B cell (primary cell): ENCODE measurements at regions of chr11 and their contacts with region 1.

Region 1: DNA sequence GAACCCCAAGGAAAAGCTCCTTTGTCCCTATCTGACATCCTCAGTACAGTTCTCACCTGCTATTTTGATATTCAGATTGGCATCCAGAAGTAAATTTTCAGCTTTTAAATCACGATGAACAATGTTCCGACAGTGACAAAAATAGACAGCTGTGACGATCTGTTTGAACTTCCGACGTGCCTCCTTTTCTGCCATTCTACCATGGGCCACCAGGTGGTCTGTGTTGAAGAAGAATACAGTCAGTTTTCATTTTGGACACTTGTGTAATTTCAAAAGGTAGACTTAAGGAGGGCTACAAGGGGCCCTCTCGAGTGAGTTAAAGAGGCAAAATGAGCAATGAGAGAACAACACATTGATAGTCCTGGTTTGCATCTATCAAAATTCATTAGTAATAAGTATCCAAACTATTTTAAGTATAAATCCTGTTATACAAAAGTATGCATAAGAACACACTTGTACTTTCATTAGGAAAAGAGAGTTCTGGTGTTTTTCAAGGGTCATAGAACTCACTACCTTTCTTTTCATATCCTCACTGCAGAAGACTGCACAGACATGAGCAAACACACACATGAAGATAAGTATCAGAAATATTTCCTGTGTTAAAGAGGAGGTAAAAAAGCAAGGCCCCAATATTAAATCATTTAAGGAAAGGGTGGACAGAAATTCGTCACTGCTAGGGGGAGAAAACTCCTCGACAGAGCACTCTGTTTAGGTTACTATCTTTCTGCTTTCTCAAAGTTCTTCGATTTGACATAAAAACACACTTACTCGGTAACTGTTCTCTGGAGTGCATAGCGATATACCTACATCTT is 89.9 kb upstream of the APOA1 start:
- DNase-seq: peak; percentile 81
- ATAC-seq: peak; percentile 44
- H3K4me3 ChIP-seq: peak overlapping the region in 3 of 5 experiments; percentile 24 to 54 (median 32)
- H3K4me3 Mint-ChIP-seq: peak overlapping the region; percentile 79
- H3K27ac ChIP-seq: peak overlapping the region; percentile 95 to 96
- H3K27ac Mint-ChIP-seq: peak overlapping the region; percentile 95
- H3K4me1 ChIP-seq: peaks cover 86 to 91% of the 10 kb centered on the region in 2 donors
- H3K4me1 Mint-ChIP-seq: peaks cover 79% of the 10 kb centered on the region
- H3K27me3 ChIP-seq: no peaks in the 10 kb centered on the region
- H3K27me3 Mint-ChIP-seq: no peaks in the 10 kb centered on the region
- CTCF ChIP-seq: peak; percentile 79

Region 2: DNA sequence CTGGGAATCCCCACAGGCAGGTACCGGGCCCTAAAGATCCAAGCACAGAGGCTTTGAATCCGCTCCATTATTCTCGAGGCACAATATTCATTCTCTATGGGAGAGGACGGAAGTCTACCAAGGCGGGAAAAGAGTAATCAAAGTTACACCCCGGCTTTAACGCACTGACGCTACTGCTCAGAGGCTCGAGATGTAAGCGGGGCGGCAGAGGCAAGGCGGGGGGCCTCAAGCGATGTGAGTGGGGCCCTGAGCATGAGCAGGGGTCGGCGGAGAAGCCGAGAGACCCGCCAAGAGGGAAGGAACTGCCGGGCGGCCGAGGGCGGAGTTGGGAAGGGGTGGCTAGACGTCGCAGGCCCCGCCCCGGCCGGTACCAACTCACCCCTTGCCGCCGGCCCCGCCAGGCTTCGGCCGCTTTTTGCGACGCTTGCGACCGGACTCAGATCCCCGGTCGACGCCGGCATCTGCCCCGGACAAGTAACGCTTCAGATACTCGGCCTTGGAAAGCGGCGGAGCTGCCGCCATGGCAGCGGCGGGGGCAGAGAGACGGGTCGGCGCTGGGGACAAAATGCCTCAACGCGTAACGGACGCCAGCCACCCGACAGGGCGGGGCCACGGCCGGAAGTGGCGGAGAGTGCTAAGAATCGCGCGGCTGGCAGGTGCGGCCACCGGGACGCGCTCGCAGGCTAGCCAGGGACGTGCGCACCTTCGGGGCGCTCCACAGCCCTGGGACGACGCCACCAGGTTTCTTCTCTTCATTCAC is 154.7 kb before region 1 on chr11 and contains the start of gene BUD13:
- CTCF ChIA-PET with region 1: no interaction called
- POLR2A ChIA-PET with region 1: no interaction called
- intact Hi-C with region 1: loop called (anchors 5 kb)
- DNase-seq: peak; percentile 96
- ATAC-seq: peak; percentile 89
- H3K4me3 ChIP-seq: peak within 1 kb of the TSS; percentile 71 to 99 (median 95)
- H3K4me3 Mint-ChIP-seq: peak within 1 kb of the TSS; percentile 93
- H3K27ac ChIP-seq: peak within 1 kb of the TSS; percentile 85 to 96
- H3K27ac Mint-ChIP-seq: peak within 1 kb of the TSS; percentile 93
- H3K4me1 ChIP-seq: peaks cover 23 to 28% of the 10 kb centered on the region in 2 donors
- H3K4me1 Mint-ChIP-seq: peaks cover 34% of the 10 kb centered on the region
- H3K27me3 ChIP-seq: no peaks in the 10 kb centered on the region
- H3K27me3 Mint-ChIP-seq: no peaks in the 10 kb centered on the region
- CTCF ChIP-seq: no peak
- total RNA-seq, gene BUD13: 24.2 and 24.8 TPM in 2 replicates

Region 3: GRCh38 chr11:116895048-116895757 is 32.2 kb before region 1 on chr11:
- CTCF ChIA-PET with region 1: no interaction called
- POLR2A ChIA-PET with region 1: no interaction called
- intact Hi-C with region 1: loop called (anchors 5 kb)
- DNase-seq: peak; percentile 64
- ATAC-seq: peak; percentile 63
- H3K4me3 ChIP-seq: no peak overlapping the region
- H3K4me3 Mint-ChIP-seq: no peak overlapping the region
- H3K27ac ChIP-seq: peak overlapping the region in 1 of 2 donors; percentile 51
- H3K27ac Mint-ChIP-seq: peak overlapping the region; percentile 34
- H3K4me1 ChIP-seq: peaks cover 0 to 5% of the 10 kb centered on the region in 2 donors
- H3K4me1 Mint-ChIP-seq: peaks cover 13% of the 10 kb centered on the region
- H3K27me3 ChIP-seq: no peaks in the 10 kb centered on the region
- H3K27me3 Mint-ChIP-seq: no peaks in the 10 kb centered on the region
- CTCF ChIP-seq: peak; percentile 20

Region 4: GRCh38 chr11:116948391-116948790 is 21.0 kb after region 1 on chr11:
- CTCF ChIA-PET with region 1: interaction called, 7 read pairs
- POLR2A ChIA-PET with region 1: interaction called, 6 read pairs
- intact Hi-C with region 1: loop called (anchors 2 kb)
- DNase-seq: peak; percentile 23
- ATAC-seq: no peak
- H3K4me3 ChIP-seq: no peak overlapping the region
- H3K4me3 Mint-ChIP-seq: peak overlapping the region; percentile 32
- H3K27ac ChIP-seq: peak overlapping the region; percentile 8 to 72
- H3K27ac Mint-ChIP-seq: peak overlapping the region; percentile 37
- H3K4me1 ChIP-seq: peaks cover 12% of the 10 kb centered on the region in 2 donors
- H3K4me1 Mint-ChIP-seq: peaks cover 21% of the 10 kb centered on the region
- H3K27me3 ChIP-seq: no peaks in the 10 kb centered on the region
- H3K27me3 Mint-ChIP-seq: no peaks in the 10 kb centered on the region
- CTCF ChIP-seq: no peak

Region 5: GRCh38 chr11:116980136-116980793 is 52.9 kb after region 1 on chr11:
- CTCF ChIA-PET with region 1: interaction called, 7 read pairs
- POLR2A ChIA-PET with region 1: interaction called, 5 read pairs
- intact Hi-C with region 1: loop called (anchors 1 kb)
- DNase-seq: peak; percentile 88
- ATAC-seq: peak; percentile 97
- H3K4me3 ChIP-seq: peak overlapping the region; percentile 11 to 65 (median 49)
- H3K4me3 Mint-ChIP-seq: peak overlapping the region; percentile 85
- H3K27ac ChIP-seq: peak overlapping the region; percentile 91 to 94
- H3K27ac Mint-ChIP-seq: peak overlapping the region; percentile 95
- H3K4me1 ChIP-seq: peaks cover 62 to 66% of the 10 kb centered on the region in 2 donors
- H3K4me1 Mint-ChIP-seq: peaks cover 63% of the 10 kb centered on the region
- H3K27me3 ChIP-seq: no peaks in the 10 kb centered on the region
- H3K27me3 Mint-ChIP-seq: no peaks in the 10 kb centered on the region
- CTCF ChIP-seq: no peak

Region 6: DNA sequence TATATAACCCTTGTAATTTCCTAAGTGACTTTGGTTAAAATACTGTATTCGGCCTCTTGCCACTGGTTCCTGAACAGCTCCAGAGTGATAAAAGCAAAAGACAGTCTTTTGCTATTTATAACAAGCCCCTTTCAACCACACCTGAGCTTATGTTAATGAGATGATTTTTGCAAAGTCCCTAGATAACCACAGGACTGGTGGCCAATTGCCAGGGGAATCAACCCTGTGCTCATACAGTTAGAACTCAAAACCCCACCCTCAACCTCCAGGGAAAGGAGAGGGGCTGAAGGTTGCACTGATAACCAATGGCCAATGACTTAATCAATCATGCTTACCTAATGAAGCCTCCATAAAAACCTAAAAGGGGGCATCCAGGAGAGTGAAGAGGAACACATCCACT is 92.9 kb after region 1 on chr11:
- CTCF ChIA-PET with region 1: interaction called, 8 read pairs
- POLR2A ChIA-PET with region 1: no interaction called
- intact Hi-C with region 1: loop called (anchors 5 kb)
- DNase-seq: peak; percentile 70
- ATAC-seq: peak; percentile 81
- H3K4me3 ChIP-seq: peak overlapping the region in 3 of 5 experiments; percentile 3 to 21 (median 13)
- H3K4me3 Mint-ChIP-seq: peak overlapping the region; percentile 65
- H3K27ac ChIP-seq: peak overlapping the region; percentile 77 to 80
- H3K27ac Mint-ChIP-seq: peak overlapping the region; percentile 71
- H3K4me1 ChIP-seq: peaks cover 58 to 66% of the 10 kb centered on the region in 2 donors
- H3K4me1 Mint-ChIP-seq: peaks cover 63% of the 10 kb centered on the region
- H3K27me3 ChIP-seq: no peaks in the 10 kb centered on the region
- H3K27me3 Mint-ChIP-seq: no peaks in the 10 kb centered on the region
- CTCF ChIP-seq: no peak

Region 7: DNA sequence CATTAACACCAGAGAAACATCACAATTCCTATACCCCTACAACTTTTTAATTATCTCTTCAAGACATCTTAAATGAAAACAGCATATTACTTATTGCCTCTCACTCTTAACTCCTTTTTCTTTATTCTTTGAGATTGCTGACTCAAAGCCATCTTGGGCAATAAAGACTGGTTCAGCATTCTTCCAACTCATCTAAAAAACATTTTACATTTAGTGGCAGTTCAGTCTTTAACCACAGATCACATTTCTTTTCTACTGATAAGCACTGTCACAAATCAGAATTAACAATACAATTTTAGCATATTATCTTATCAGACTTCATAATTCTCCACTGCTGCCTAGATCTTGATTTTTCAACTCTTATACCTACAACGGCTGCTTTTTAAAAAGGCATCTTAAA is 136.9 kb after region 1 on chr11:
- CTCF ChIA-PET with region 1: interaction called, 4 read pairs
- POLR2A ChIA-PET with region 1: no interaction called
- intact Hi-C with region 1: loop called (anchors 10 kb)
- DNase-seq: no peak
- ATAC-seq: no peak
- H3K4me3 ChIP-seq: no peak overlapping the region
- H3K4me3 Mint-ChIP-seq: peak overlapping the region; percentile 65
- H3K27ac ChIP-seq: peak overlapping the region; percentile 74 to 91
- H3K27ac Mint-ChIP-seq: peak overlapping the region; percentile 10
- H3K4me1 ChIP-seq: peaks cover 30 to 41% of the 10 kb centered on the region in 2 donors
- H3K4me1 Mint-ChIP-seq: peaks cover 71% of the 10 kb centered on the region
- H3K27me3 ChIP-seq: no peaks in the 10 kb centered on the region
- H3K27me3 Mint-ChIP-seq: no peaks in the 10 kb centered on the region
- CTCF ChIP-seq: no peak